Activated B cell treated with CpG ODN at 0.5 μM for 24 hours (primary cell): ENCODE measurements at regions of chr1 and their contacts with region 1.

Region 1: GRCh38 chr1:111448918-111449702 is at the starts of genes ATP5PB and WDR77:
- DNase-seq: peak; percentile 77
- ATAC-seq: peak; percentile 96
- H3K4me3 Mint-ChIP-seq: peak within 1 kb of the TSS; percentile 100
- H3K27ac Mint-ChIP-seq: peak within 1 kb of the TSS; percentile 98
- H3K4me1 Mint-ChIP-seq: peaks cover 71% of the 10 kb centered on the region
- H3K27me3 Mint-ChIP-seq: no peaks in the 10 kb centered on the region
- CTCF ChIP-seq: no peak
- total RNA-seq, gene ATP5PB: 220 and 229 TPM in 2 replicates
- total RNA-seq, gene WDR77: 55.8 and 63.3 TPM in 2 replicates

Region 2: DNA sequence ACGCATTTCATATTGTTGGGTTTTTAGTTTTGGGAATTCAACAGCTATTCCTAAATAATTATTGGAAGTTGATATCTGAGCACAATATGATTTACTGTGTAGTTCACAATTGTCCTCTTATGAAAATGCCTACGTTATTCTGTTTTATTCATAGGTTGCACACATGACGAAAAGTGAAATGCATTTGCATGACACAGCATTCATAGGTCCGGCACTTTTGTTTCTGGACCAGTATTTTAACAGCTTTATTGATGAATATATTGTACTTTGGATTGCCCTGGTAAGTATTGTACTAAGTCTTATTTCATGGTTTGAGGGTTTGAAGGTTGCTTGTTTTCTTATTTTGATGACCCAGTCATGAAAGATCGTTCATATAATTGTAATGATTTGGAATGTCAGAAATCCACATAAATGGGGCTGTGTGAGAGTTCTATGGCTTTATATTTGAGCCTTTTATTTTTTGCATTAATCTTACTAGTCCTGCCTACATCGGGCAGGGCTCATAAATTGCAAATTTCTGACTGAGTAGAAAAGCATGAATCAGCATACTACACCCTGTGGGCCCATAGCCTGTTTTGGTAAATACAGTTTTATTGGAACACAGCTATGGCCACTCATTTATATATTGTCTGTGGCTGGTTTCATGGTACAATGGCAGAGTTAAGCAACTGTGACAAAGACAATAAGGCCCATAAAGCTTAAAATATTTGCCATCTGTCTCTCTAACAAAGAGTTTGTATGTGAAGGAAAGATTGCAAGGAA is 265.6 kb before region 1 on chr1:
- CTCF ChIA-PET with region 1: no interaction called
- POLR2A ChIA-PET with region 1: no interaction called
- intact Hi-C with region 1: no loop called
- DNase-seq: no peak
- ATAC-seq: no peak
- H3K4me3 Mint-ChIP-seq: no peak overlapping the region
- H3K27ac Mint-ChIP-seq: peak overlapping the region; percentile 65
- H3K4me1 Mint-ChIP-seq: peaks cover 49% of the 10 kb centered on the region
- H3K27me3 Mint-ChIP-seq: no peaks in the 10 kb centered on the region
- CTCF ChIP-seq: no peak

Region 3: GRCh38 chr1:111346089-111346885 is 102.8 kb before region 1 on chr1:
- CTCF ChIA-PET with region 1: no interaction called
- POLR2A ChIA-PET with region 1: no interaction called
- intact Hi-C with region 1: loop called (anchors 1 kb)
- DNase-seq: peak; percentile 82
- ATAC-seq: peak; percentile 88
- H3K4me3 Mint-ChIP-seq: peak overlapping the region; percentile 93
- H3K27ac Mint-ChIP-seq: peak overlapping the region; percentile 85
- H3K4me1 Mint-ChIP-seq: peaks cover 13% of the 10 kb centered on the region
- H3K27me3 Mint-ChIP-seq: no peaks in the 10 kb centered on the region
- CTCF ChIP-seq: no peak

Region 4: DNA sequence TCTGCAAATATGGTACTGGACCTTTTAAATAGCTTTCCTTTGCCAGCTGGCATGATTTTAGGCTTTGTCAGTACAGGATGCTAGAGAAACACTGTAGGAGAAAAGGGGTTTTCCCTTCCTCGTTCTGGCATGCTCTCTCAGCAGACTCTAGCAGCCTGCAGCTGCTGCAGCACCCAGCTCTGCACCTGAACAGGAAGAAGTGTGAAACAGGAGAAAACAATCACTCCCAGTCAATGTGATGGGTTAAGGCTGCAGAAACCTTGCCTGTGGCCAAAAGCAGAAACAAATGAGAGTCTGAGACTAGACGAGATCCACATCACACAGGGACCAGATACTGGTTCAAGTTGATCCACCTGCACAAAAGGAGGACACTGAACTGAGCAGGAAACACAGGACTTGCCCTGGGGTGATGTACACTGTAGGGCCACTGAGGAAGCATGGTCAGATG is 42.8 kb before region 1 on chr1:
- CTCF ChIA-PET with region 1: no interaction called
- POLR2A ChIA-PET with region 1: no interaction called
- intact Hi-C with region 1: loop called (anchors 1 kb)
- DNase-seq: peak; percentile 29
- ATAC-seq: peak; percentile 98
- H3K4me3 Mint-ChIP-seq: peak overlapping the region; percentile 33
- H3K27ac Mint-ChIP-seq: peak overlapping the region; percentile 72
- H3K4me1 Mint-ChIP-seq: peaks cover 35% of the 10 kb centered on the region
- H3K27me3 Mint-ChIP-seq: no peaks in the 10 kb centered on the region
- CTCF ChIP-seq: no peak

Region 5: GRCh38 chr1:111471012-111471411 is 21.9 kb after region 1 on chr1:
- CTCF ChIA-PET with region 1: interaction called, 4 read pairs
- POLR2A ChIA-PET with region 1: interaction called, 21 read pairs
- intact Hi-C with region 1: loop called (anchors 1 kb)
- DNase-seq: peak; percentile 45
- ATAC-seq: peak; percentile 92
- H3K4me3 Mint-ChIP-seq: no peak overlapping the region
- H3K27ac Mint-ChIP-seq: no peak overlapping the region
- H3K4me1 Mint-ChIP-seq: peaks cover 29% of the 10 kb centered on the region
- H3K27me3 Mint-ChIP-seq: no peaks in the 10 kb centered on the region
- CTCF ChIP-seq: no peak

Region 6: GRCh38 chr1:111656086-111657017 is 207.2 kb after region 1 on chr1:
- CTCF ChIA-PET with region 1: no interaction called
- POLR2A ChIA-PET with region 1: no interaction called
- intact Hi-C with region 1: loop called (anchors 1 kb)
- DNase-seq: no peak
- ATAC-seq: no peak
- H3K4me3 Mint-ChIP-seq: no peak overlapping the region
- H3K27ac Mint-ChIP-seq: no peak overlapping the region
- H3K4me1 Mint-ChIP-seq: peaks cover 35% of the 10 kb centered on the region
- H3K27me3 Mint-ChIP-seq: no peaks in the 10 kb centered on the region
- CTCF ChIP-seq: peak; percentile 52